ENCODE measurements at regions of chr1 and their contacts with region 1.

Region 1: DNA sequence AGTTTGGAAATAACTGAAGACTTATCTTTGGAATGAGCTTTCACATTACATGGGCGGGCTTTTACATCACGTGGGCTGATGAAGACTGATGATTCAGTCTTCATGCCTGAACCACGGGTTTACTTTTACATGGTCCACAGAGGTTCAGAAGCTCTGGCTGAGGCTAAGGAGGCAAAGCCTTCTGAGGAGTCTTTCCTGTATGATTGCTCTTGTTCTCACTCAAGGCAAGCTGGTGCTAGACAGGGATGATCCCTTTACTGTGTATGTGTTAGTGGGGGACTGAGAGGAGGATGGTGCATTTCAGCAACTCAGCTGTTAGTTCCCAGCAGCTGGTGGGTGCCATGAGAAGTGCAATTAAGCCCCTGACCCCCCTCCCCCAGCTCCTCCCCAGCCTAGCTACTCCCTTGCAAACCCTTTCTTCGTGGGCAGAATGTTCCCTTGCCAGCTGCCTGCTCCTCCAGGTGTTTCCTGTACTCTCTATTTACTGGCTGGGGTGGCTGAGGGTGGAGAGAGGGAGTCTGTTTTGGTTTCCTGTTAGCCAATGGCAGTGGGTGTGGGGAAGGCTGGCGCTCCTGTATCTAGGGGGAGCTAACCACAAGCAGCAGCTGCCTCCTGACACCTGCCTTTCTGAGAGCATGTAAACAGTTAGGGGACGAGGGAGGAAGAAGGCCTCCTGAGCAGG is 15.4 kb downstream of the BTG2 start:
- DNase-seq: peak in 8 of 9 donors; percentile 50 to 93 (median 88)
- ATAC-seq: peak; percentile 76
- H3K4me3 ChIP-seq: peak overlapping the region; percentile 41
- H3K4me3 Mint-ChIP-seq: peak overlapping the region; percentile 66 to 88 (median 80)
- H3K27ac ChIP-seq: peak overlapping the region; percentile 98
- H3K27ac Mint-ChIP-seq: peak overlapping the region; percentile 85 to 100 (median 99)
- H3K4me1 ChIP-seq: peaks cover 66 to 74% of the 10 kb centered on the region in 2 donors
- H3K4me1 Mint-ChIP-seq: peaks cover 77 to 95% (median 92%) of the 10 kb centered on the region in 7 donors
- H3K27me3 ChIP-seq: no peaks in the 10 kb centered on the region
- H3K27me3 Mint-ChIP-seq: no peaks in the 10 kb centered on the region

Region 2: DNA sequence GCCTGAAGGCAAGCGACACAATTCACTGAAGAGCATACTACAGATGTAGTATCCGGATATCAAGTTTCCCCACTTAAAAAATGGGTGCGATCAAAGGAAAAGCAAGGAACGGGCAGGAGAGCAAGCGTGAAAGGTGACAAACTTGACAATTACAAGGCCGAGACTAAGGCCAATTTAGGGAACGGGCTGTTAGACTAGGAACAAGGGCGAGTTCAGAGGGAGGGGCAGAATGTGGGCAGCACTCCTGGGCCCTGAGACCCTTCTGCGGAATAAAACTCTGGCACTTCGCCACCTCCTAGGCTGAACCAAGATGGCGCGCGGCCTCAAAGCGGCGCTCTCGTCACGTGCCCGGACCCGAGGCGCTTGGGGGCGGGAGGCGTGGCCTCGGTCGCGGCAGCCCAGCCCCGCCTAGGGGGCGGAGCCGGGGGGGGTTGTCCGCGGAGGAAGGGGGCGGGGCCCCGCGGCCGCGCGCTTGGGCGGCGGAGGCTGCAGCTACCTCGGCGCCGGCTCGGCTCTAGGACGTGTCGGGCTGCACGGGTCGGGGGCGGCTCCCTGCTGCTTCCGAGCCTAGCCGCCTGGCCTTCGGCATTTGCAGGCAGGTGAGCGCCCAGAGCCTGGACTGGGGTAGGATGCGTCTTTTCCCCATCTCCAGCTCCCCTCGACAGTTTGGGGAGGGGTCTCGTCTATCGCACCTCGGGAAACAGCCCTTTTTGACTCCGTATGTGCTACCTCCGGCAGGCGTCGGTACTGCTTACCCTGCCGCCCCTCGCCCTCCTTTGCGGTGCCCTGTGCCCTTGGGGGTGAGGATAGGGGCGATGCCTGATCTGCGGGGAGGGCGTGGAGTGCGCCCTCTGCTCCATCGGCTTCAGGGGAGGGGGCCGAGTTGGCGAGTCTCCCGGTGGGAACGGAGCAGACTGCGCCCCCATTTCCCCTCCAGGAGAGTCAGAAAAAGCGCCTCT is 294.4 kb before region 1 on chr1 and contains the start of gene PPFIA4:
- CTCF ChIA-PET with region 1: no interaction called
- POLR2A ChIA-PET with region 1: no interaction called
- intact Hi-C with region 1: loop called (anchors 5 to 10 kb)
- DNase-seq: peak; percentile 72 to 94 (median 89)
- ATAC-seq: peak; percentile 98
- H3K4me3 ChIP-seq: peak within 1 kb of the TSS; percentile 84
- H3K4me3 Mint-ChIP-seq: peak within 1 kb of the TSS; percentile 74 to 95 (median 84)
- H3K27ac ChIP-seq: peak within 1 kb of the TSS; percentile 53
- H3K27ac Mint-ChIP-seq: peak within 1 kb of the TSS; percentile 73 to 96 (median 85)
- H3K4me1 ChIP-seq: peaks cover 0 to 11% of the 10 kb centered on the region in 2 donors
- H3K4me1 Mint-ChIP-seq: peaks cover 0 to 24% (median 14%) of the 10 kb centered on the region in 7 donors
- H3K27me3 ChIP-seq: no peaks in the 10 kb centered on the region
- H3K27me3 Mint-ChIP-seq: peaks cover 0 to 9% (median 0%) of the 10 kb centered on the region in 5 donors
- total RNA-seq, gene PPFIA4: 0.40 to 45.5 (median 2.4) TPM

Region 3: DNA sequence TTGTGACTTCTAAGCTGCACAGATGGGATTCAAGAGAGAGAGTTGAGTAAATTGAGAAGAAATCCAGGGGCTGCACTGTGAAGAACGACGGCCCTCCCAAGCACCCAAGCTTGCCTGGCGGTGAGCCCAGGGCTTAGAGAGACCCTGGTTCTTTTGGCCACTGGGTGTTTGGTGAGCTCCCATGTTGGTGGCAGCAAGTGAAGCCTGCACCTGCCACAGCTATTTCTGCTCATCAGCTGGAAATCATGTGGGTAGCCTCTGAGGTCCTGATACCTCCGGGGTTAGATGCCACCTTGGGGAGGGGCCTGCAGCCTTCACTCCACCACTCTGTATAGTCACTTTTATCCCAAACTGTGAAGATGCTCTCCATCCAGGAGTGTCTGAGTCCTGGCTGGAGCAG is 21.6 kb before region 1 on chr1:
- CTCF ChIA-PET with region 1: interaction called, 6 read pairs
- POLR2A ChIA-PET with region 1: interaction called, 1,812 read pairs
- intact Hi-C with region 1: no loop called
- DNase-seq: no peak
- ATAC-seq: peak; percentile 47
- H3K4me3 ChIP-seq: no peak overlapping the region
- H3K4me3 Mint-ChIP-seq: no peak overlapping the region
- H3K27ac ChIP-seq: no peak overlapping the region
- H3K27ac Mint-ChIP-seq: peak overlapping the region in 6 of 9 donors; percentile 7 to 68 (median 47)
- H3K4me1 ChIP-seq: peaks cover 4 to 8% of the 10 kb centered on the region in 2 donors
- H3K4me1 Mint-ChIP-seq: peaks cover 49 to 81% (median 65%) of the 10 kb centered on the region in 7 donors
- H3K27me3 ChIP-seq: no peaks in the 10 kb centered on the region
- H3K27me3 Mint-ChIP-seq: no peaks in the 10 kb centered on the region

Region 4: DNA sequence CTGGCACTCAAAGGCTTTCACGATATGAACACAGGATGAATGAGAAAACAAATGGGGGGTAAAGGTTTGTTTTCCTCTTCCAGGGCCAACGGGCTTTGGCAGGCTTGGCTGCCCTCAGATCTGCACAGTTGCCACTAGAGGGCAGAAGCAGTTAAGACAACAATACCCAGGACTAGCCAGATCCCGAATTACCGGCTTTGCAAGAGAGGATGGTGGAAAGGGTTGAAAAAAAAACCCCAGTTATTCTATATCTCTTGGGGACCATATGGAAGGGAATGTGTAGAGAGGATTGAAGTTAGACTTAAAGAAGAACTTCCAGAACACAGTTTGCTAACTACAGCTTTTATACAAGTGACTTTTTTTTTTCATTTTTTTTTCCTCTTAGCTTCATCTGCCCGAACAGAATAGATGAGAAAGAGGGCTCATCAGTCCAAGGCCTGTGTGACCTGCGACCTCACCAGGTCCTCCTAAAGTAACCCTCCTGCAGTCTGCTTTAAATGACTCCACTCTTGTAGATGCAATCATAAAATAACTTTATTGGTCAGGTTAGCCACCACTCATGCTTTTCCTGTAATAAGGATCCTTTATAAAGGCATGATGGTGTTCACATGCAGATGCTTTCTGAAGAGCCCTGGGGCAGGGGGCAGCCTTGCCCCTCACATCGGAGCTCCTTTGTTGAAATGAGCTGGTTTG is 19.5 kb after region 1 on chr1:
- CTCF ChIA-PET with region 1: interaction called, 144 read pairs
- POLR2A ChIA-PET with region 1: interaction called, 113 read pairs
- intact Hi-C with region 1: loop called in 1 of 2 experiments (anchors 2 kb)
- DNase-seq: peak in 7 of 9 donors; percentile 39 to 68 (median 62)
- ATAC-seq: peak; percentile 80
- H3K4me3 ChIP-seq: no peak overlapping the region
- H3K4me3 Mint-ChIP-seq: no peak overlapping the region
- H3K27ac ChIP-seq: no peak overlapping the region
- H3K27ac Mint-ChIP-seq: peak overlapping the region in 7 of 9 donors; percentile 1 to 75 (median 34)
- H3K4me1 ChIP-seq: peaks cover 9 to 18% of the 10 kb centered on the region in 2 donors
- H3K4me1 Mint-ChIP-seq: peaks cover 24 to 40% (median 34%) of the 10 kb centered on the region in 7 donors
- H3K27me3 ChIP-seq: no peaks in the 10 kb centered on the region
- H3K27me3 Mint-ChIP-seq: peaks cover 0 to 50% (median 6%) of the 10 kb centered on the region in 5 donors

Region 5: GRCh38 chr1:203378556-203379245 is 58.0 kb after region 1 on chr1:
- CTCF ChIA-PET with region 1: no interaction called
- POLR2A ChIA-PET with region 1: no interaction called
- intact Hi-C with region 1: no loop called
- DNase-seq: no peak
- ATAC-seq: no peak
- H3K4me3 ChIP-seq: no peak overlapping the region
- H3K4me3 Mint-ChIP-seq: no peak overlapping the region
- H3K27ac ChIP-seq: no peak overlapping the region
- H3K27ac Mint-ChIP-seq: no peak overlapping the region
- H3K4me1 ChIP-seq: no peaks in the 10 kb centered on the region
- H3K4me1 Mint-ChIP-seq: peaks cover 0 to 6% (median 0%) of the 10 kb centered on the region in 7 donors
- H3K27me3 ChIP-seq: no peaks in the 10 kb centered on the region
- H3K27me3 Mint-ChIP-seq: peaks cover 2 to 31% (median 9%) of the 10 kb centered on the region in 5 donors

Region 6: GRCh38 chr1:203672346-203672745 is 351.6 kb after region 1 on chr1:
- CTCF ChIA-PET with region 1: no interaction called
- POLR2A ChIA-PET with region 1: no interaction called
- intact Hi-C with region 1: no loop called
- DNase-seq: no peak
- ATAC-seq: peak; percentile 12
- H3K4me3 ChIP-seq: no peak overlapping the region
- H3K4me3 Mint-ChIP-seq: peak overlapping the region in 6 of 10 donors; percentile 6 to 76 (median 64)
- H3K27ac ChIP-seq: peak overlapping the region; percentile 53
- H3K27ac Mint-ChIP-seq: peak overlapping the region in 8 of 9 donors; percentile 87 to 97 (median 94)
- H3K4me1 ChIP-seq: peaks cover 46 to 57% of the 10 kb centered on the region in 2 donors
- H3K4me1 Mint-ChIP-seq: peaks cover 62 to 86% (median 72%) of the 10 kb centered on the region in 7 donors
- H3K27me3 ChIP-seq: no peaks in the 10 kb centered on the region
- H3K27me3 Mint-ChIP-seq: no peaks in the 10 kb centered on the region

Region 7: DNA sequence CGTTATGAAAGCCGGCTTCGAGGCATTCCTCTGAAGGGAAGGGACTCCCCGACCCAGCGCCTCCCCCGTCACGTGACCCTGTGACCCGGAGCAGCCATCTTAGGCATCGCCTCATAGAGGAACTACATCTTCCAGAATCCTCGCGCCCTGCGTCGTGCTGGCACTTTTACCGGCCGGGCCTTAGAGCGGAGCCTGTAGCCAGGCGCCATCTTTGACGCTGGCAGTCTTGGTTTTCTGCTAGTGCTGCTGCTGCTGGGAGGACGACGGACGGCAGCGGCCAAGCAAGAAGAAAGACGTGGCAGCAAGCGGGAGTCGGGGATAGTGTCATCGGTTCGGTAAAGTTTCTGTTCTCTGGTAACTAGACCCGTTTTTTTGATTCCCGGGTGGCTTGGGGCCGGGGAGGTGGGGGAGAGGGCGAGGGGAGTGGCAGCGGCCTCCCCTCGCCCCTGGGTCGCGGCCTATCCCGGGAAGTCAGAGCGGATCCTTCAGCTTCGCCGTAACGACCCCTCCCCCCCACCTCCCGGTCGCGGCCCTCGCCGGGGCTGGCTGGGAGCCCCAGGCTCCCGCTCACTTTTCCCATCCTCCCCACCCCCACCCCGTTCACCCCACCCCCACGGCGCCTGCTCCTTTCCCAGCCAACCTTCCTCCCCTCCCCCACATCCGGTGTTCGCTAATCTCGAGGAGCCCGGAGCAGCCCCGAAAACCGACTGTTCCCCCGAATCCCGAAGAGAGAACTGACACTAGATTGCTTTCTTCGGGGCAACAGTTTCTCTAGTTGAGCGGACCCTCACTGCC is 474.9 kb after region 1 on chr1 and contains the starts of genes ZBED6 and ZC3H11A:
- CTCF ChIA-PET with region 1: no interaction called
- POLR2A ChIA-PET with region 1: no interaction called
- intact Hi-C with region 1: loop called (anchors 5 to 10 kb)
- DNase-seq: peak; percentile 85 to 100 (median 97)
- ATAC-seq: peak; percentile 99
- H3K4me3 ChIP-seq: peak within 1 kb of the TSS; percentile 80
- H3K4me3 Mint-ChIP-seq: peak within 1 kb of the TSS; percentile 94 to 98 (median 96)
- H3K27ac ChIP-seq: peak within 1 kb of the TSS; percentile 80
- H3K27ac Mint-ChIP-seq: peak within 1 kb of the TSS; percentile 82 to 98 (median 96)
- H3K4me1 ChIP-seq: peaks cover 35 to 36% of the 10 kb centered on the region in 2 donors
- H3K4me1 Mint-ChIP-seq: peaks cover 18 to 55% (median 48%) of the 10 kb centered on the region in 7 donors
- H3K27me3 ChIP-seq: no peaks in the 10 kb centered on the region
- H3K27me3 Mint-ChIP-seq: no peaks in the 10 kb centered on the region
- total RNA-seq, gene ZBED6: 23.8 to 36.1 (median 31.9) TPM
- total RNA-seq, gene ZC3H11A: 70.9 to 138 (median 91.6) TPM

Measured in naive thymus-derived CD4-positive, alpha-beta T cell (primary cell).